ENCODE measurements at regions of chr5 and their contacts with region 1.

Region 1: DNA sequence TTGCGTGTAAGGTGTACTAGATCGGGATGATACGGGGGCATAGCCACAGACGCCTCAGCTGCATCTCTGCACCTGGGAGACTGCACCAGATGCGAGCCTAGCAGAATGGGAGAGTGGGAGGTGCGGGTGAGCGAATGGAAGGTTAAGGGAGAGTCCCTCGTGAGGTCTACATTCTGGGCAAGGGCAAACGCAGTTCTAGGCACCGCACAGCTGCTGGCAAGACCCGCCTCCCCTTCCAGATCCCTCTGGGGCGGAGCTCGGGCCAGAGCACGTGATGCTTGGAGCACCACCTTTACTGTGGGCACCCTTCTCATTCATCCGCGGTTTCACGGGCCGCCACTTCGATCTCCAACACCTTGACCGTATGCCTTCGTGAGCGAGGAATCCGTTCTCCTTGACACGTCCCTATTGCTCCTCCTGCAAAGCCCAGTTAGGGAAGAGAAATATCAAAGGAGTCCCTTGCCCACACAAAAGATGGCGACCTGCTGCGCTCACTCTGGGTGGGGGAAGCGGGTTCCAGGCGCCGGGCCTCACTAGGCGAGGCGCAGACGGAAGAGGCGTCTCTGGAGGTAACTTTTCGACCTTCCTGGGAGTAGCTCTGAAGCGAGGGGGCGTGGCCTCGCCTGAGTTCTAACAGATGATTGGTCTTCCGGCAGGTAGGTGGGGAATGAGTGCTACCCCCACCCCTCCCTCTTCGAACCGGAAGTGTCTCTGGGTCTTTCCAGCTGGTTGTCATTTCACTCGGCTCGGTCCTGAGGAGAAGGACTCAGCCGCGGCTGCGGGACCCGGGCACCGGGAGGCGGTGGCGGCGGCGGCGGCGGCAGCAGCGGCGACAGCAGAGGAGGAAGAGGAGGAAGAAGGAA is at the start of gene CPEB4:
- DNase-seq: peak; percentile 98 to 99
- H3K4me3 ChIP-seq: peak within 1 kb of the TSS; percentile 72 to 92 (median 91)
- H3K27ac ChIP-seq: peak within 1 kb of the TSS; percentile 90 to 94
- H3K4me1 ChIP-seq: no peaks in the 10 kb centered on the region
- H3K27me3 ChIP-seq: no peaks in the 10 kb centered on the region
- CTCF ChIP-seq: no peak
- POLR2A ChIP-seq: peak; percentile 96
- total RNA-seq, gene CPEB4: 36.4 to 71.7 (median 49.9) TPM

Region 2: DNA sequence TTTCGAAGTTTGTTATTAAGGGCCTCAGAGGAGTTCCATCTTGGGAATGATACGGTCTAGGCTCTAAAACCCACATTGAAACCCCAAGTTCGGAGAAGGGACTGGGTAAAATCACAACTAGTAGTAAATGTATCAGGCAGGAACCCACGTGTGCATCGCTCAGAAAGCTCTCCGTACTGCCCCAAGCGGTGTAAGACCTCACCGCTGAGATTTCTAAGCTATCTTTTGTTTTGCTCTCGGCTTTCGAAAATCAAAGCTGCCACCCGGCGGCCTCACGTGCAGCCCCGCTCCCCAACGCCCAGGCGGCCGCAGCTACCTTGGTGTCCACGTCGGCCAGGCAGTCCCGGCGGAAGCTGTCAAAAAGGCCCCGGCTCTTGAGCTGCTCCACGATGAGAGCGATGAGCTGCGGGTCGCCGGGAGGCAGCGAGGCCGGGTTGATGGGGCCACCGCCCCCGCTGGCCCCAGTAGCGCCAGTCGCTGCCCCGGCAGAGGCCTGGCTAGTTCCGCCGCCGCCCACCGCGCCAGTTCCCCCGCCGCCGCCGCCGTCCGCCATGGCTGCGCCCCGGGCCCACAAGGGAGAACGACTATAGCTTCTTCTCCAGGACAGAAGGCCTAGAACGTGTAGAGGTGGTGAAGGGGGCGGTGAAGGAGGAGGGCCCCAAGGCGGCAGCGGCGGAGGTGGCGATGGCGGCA is 271.8 kb before region 1 on chr5:
- intact Hi-C with region 1: loop called (anchors 10 kb)
- DNase-seq: peak; percentile 48 to 60
- H3K4me3 ChIP-seq: peak overlapping the region; percentile 87 to 95 (median 91)
- H3K27ac ChIP-seq: peak overlapping the region; percentile 92 to 95
- H3K4me1 ChIP-seq: peaks cover 0 to 20% of the 10 kb centered on the region in 2 donors
- H3K27me3 ChIP-seq: no peaks in the 10 kb centered on the region
- CTCF ChIP-seq: peak; percentile 18 to 58 (median 53)
- POLR2A ChIP-seq: no peak

Region 3: DNA sequence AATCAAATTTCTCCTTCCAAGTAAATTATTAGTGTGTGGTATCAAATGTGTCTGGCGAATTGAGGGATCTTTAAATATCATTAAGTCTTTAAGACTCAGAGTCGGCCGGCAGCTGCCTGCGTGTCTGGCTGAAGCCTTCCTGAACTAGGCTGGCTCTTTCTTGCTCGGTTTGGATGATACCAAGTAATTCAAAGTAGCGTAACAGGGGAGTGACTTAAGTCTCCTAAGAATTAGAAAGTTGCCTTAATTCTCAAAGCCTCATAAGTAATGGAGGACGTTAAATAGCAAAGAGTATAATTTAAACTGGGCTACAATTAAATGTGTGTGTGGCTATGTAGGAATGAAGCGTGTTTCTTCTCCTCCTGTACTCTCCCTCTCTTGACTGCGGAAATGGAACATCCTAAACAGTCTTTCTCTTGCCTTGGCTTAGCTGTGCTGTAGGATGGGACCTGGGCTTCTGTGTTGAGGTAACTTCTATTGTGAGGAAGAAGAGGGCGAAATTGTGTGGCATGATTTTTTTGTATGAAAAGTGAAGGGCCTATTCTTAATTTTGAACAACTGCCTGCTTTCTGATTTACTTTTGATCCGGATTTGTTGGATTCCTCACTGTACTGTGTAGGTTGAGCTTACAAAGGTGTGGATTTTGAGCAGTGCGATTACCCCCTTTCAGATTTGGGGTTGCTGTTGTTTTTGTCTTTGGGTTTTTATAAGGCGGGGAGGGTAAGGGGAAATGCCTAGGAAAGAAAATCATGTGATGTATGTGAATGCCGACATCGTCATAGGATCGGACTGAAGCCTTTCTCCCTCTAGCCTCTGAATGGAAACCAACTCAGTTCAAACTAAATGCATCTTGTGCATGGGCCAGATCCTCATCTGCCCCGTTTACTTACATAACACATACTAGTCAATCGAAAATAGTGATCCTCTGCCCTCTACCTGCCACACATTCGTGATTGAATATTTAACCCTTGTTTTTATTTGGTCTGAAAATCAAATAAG is 30.2 kb after region 1 on chr5:
- intact Hi-C with region 1: no loop called
- DNase-seq: peak in 1 of 2 donors; percentile 52
- H3K4me3 ChIP-seq: peak overlapping the region; percentile 44 to 67 (median 45)
- H3K27ac ChIP-seq: peak overlapping the region; percentile 80 to 88
- H3K4me1 ChIP-seq: peaks cover 0 to 11% of the 10 kb centered on the region in 2 donors
- H3K27me3 ChIP-seq: no peaks in the 10 kb centered on the region
- CTCF ChIP-seq: no peak
- POLR2A ChIP-seq: no peak

Region 4: DNA sequence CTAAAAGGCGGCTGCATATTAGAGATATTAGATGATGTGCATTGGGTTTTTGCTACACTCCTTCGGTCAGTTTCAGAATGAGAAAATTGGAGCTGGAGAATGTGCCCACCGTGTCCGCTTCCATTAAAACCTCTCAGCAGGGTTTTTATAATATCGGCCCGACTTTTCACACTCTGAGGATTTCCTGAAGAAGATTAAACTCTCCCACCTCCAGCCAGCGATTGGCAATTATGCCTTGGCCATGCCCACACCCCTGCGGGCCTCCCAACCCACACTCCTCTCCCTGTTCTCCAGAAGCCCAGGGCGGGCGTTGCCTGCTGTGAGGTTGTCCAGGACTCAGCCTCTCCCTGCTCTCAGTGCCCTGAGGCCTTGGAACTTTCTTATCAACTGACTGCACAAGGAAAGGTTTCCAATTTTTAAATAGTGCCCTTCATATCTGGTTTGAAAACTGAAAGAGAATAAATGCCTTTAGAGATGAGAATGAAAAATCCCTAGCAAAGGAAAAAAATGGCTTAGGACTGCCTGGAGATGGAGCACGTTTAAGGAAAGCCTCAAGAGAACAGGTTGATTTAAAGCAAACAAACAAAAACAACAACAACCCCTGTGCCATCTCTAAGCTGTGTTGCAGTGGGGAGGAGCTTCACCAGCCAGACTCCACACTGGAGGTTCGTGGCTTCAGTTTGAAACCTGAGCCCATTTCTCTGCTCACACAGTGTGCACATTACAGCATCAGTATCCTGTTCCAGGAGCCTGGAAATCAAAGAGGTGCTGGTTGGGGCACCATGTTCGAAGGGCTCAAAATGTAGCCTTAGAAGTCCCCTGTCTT is 450.6 kb after region 1 on chr5:
- intact Hi-C with region 1: no loop called
- DNase-seq: no peak
- H3K4me3 ChIP-seq: no peak overlapping the region
- H3K27ac ChIP-seq: no peak overlapping the region
- H3K4me1 ChIP-seq: no peaks in the 10 kb centered on the region
- H3K27me3 ChIP-seq: peaks cover 0 to 29% of the 10 kb centered on the region in 2 donors
- CTCF ChIP-seq: no peak
- POLR2A ChIP-seq: no peak